KBM-7 (cell line): ENCODE measurements at regions of chr7 and their contacts with region 1.

Region 1: GRCh38 chr7:12638851-12639467 is 48.5 kb upstream of the ARL4A start:
- DNase-seq: peak; percentile 72

Region 2: DNA sequence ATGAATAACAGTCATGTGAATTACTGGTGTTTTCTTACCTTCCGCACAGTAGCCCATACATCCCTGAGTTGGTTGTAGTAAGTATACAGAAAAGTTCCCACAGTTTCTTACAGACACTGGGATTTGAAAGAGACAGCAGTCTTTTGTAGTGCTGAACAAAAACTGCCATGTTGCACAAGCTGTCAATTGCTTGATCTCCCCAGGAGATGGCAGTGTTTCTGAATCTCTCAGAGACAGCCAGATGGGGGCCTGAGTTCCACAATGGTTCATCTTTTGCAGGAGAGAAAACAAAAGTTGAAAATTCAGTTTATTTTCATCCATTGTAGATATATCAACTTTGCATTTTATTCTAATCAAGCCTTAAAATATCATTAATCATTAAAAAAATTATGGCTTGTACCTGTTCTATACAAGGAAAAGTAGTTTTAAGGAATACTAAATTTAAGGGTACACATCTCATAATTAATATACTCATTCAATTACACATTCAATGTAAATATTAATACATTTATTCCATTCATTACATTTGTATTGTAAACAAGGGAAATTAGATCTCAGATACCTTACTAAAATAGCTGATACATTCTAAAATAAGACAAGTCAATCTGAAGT is 249.8 kb before region 1 on chr7:
- in situ Hi-C with region 1: no loop called
- DNase-seq: peak; percentile 59

Region 3: DNA sequence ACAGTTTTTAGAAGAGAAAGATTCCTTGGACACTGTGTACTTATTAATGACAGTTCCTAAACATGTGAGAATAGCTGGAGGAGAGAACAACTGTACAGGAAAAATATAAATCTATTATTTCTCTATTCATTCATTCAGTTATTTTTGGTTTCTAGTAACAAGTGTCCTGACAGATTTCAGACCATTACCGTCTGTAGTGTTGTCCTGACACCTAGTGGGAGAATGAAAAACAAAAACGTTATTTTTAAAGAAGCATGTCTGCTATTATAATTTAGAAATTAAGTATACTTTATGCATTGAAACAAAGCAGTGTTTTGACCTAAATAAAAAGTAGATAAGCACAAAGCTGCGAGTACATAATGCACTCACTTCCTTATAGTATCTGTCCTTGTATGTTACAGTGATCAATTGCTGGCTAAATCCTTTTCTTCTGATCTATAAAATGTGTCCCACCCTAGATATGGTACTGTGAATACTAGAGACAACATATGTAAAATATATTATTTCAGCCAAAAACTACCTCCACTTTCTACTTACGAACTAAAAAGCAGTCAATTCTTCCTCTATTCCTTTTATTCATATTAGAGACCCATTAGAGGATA is 624.1 kb after region 1 on chr7:
- in situ Hi-C with region 1: loop called (anchors 25 kb)
- DNase-seq: peak; percentile 47